PC-3 (cell line): ENCODE measurements at regions of chr17 and their contacts with region 1.

Region 1: DNA sequence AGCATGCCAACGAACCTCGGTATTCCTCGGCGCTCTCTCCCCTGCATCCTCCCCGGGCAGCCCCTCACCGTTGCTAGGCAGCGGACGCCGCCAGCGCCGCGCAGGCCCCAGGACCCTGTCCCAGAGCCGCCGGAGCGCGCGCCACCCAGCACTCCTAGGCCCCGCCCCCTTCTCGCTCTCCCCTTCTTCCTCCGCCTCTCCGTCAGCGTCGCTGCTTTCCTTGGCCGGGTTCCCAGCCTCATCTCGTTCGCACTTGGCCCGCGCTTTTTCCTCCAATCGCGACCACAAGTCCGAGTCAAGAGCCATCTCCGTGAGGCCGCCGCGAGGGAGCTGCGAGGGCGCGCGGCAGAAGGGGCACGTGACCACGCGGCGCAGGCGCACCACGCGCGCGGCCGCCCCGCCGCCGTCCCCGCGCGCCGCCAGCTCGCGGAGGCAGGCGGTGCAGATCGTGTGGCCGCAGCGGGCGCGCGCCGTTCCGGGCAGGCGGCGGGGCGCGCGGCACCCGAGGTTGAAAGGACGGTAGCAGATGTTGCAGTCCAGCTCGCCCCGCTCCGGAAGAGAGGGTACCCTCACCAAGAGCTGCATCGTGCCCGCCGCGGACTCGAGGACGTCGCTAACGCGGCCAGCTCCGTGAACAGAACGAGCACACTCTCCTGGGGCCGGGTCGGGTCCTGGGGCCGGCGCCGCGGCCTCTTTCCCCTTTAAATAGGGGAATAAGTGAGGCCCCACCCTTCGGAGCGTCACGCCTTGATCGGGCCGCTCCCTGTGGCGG is at the start of gene RNF227:
- DNase-seq: peak; percentile 83
- ATAC-seq: peak; percentile 76
- H3K4me3 ChIP-seq: peak within 1 kb of the TSS; percentile 69
- H3K27ac ChIP-seq: no peak within 1 kb of the TSS
- H3K4me1 ChIP-seq: peaks cover 17% of the 10 kb centered on the region
- H3K27me3 ChIP-seq: no peaks in the 10 kb centered on the region
- CTCF ChIP-seq: no peak
- total RNA-seq, gene RNF227: 0.11 and 0.52 TPM in 2 replicates

Region 2: DNA sequence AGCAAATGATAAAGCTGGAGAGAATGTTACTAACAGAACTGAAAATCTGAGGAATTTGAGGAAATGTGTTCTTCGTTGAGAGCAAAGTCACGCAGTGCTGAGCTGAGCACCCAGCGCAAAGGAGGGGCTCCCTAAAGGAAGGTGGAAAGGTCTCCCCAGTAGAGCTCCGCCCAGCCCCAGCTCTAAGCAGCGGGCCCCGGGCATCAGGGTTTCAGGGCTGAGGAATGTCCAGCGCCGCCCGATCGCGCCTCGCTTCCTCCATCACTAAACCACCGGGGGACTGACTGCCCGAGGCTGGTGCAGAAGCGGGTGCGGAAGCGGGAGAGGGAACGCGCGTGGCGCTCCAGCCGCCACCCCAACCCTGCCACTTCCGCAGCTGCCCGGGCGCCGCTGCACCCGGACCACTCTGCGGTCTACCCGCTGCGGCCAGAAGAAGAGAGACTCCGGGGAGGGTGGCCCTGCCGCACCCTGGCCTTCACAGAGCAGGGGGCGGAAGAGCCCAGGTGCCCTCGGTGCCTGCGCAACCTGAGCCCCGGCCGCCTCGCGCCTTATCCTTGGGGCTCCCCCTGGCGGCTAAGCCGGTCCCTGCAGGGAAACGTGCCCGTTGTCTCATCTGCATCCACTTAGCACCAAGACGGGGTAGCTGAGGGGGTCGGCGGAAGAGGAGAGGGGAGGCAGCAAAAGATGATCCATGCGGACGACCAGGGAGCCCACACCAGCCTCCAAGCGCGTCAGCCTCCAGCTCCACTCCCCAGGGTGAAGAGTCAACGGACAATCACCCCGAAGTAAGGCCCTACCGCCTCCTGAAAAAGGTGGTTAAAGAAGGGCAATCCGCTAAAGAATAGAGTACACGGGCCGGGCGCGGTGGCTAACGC is 74.2 kb after region 1 on chr17:
- CTCF ChIA-PET with region 1: interaction called, 5 read pairs
- POLR2A ChIA-PET with region 1: no interaction called
- intact Hi-C with region 1: loop called (anchors 1 kb)
- DNase-seq: peak; percentile 80
- ATAC-seq: peak; percentile 85
- H3K4me3 ChIP-seq: peak overlapping the region; percentile 81
- H3K27ac ChIP-seq: peak overlapping the region; percentile 8; the same call in 1 of the 2 replicates
- H3K4me1 ChIP-seq: peaks cover 7% of the 10 kb centered on the region; the same call in 1 of the 2 replicates
- H3K27me3 ChIP-seq: no peaks in the 10 kb centered on the region
- CTCF ChIP-seq: peak; percentile 82

Region 3: GRCh38 chr17:8079291-8080207 is 163.8 kb after region 1 on chr17:
- CTCF ChIA-PET with region 1: no interaction called
- POLR2A ChIA-PET with region 1: no interaction called
- intact Hi-C with region 1: no loop called
- DNase-seq: peak; percentile 69
- ATAC-seq: peak; percentile 81
- H3K4me3 ChIP-seq: peak overlapping the region; percentile 71
- H3K27ac ChIP-seq: no peak overlapping the region
- H3K4me1 ChIP-seq: peaks cover 5% of the 10 kb centered on the region; the same call in 1 of the 2 replicates
- H3K27me3 ChIP-seq: peaks cover 2% of the 10 kb centered on the region
- CTCF ChIP-seq: peak; percentile 71